AG04449 (cell line): ENCODE measurements at regions of chr1 and their contacts with region 1.

Region 1: GRCh38 chr1:204323887-204324286 is 35.8 kb downstream of the PLEKHA6 start:
- DNase-seq: no peak
- H3K4me3 ChIP-seq: no peak overlapping the region
- CTCF ChIP-seq: no peak

Region 2: DNA sequence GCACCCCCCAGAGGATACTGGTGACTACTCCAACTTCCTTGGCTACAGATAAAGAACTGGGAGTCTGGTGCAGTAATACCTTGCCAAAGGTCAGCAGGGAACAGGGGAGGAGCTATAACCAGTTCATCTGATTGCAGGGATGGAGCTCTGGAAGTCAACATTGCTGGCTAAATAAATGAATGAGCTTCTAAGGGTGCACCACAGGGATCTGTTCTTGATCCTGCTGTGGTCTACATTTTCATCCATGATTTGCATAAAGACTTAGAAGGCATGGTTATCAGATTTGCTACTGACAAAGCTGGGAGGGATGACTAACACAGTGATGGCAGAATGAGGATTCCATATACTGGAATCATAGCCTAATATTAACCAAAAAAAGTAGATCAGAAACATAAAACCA is 17.5 kb after region 1 on chr1:
- CTCF ChIA-PET with region 1: interaction called, 11 read pairs
- POLR2A ChIA-PET with region 1: no interaction called
- DNase-seq: peak; percentile 33
- H3K4me3 ChIP-seq: no peak overlapping the region
- CTCF ChIP-seq: no peak